Natural killer cell (primary cell): ENCODE measurements at regions of chr3 and their contacts with region 1.

Region 1: GRCh38 chr3:149967086-149967685 is 3.5 kb downstream of the PFN2 start:
- DNase-seq: peak in 1 of 2 donors; percentile 70
- ATAC-seq: no peak
- H3K4me3 ChIP-seq: no peak overlapping the region
- H3K4me3 Mint-ChIP-seq: peak overlapping the region; percentile 50
- H3K27ac ChIP-seq: no peak overlapping the region
- H3K27ac Mint-ChIP-seq: no peak overlapping the region
- H3K4me1 ChIP-seq: peaks cover 11% of the 10 kb centered on the region
- H3K4me1 Mint-ChIP-seq: peaks cover 20 to 23% of the 10 kb centered on the region in 2 donors
- H3K27me3 ChIP-seq: peaks cover 9% of the 10 kb centered on the region
- H3K27me3 Mint-ChIP-seq: peaks cover 8 to 14% of the 10 kb centered on the region in 2 donors
- CTCF ChIP-seq: peak; percentile 73

Region 2: DNA sequence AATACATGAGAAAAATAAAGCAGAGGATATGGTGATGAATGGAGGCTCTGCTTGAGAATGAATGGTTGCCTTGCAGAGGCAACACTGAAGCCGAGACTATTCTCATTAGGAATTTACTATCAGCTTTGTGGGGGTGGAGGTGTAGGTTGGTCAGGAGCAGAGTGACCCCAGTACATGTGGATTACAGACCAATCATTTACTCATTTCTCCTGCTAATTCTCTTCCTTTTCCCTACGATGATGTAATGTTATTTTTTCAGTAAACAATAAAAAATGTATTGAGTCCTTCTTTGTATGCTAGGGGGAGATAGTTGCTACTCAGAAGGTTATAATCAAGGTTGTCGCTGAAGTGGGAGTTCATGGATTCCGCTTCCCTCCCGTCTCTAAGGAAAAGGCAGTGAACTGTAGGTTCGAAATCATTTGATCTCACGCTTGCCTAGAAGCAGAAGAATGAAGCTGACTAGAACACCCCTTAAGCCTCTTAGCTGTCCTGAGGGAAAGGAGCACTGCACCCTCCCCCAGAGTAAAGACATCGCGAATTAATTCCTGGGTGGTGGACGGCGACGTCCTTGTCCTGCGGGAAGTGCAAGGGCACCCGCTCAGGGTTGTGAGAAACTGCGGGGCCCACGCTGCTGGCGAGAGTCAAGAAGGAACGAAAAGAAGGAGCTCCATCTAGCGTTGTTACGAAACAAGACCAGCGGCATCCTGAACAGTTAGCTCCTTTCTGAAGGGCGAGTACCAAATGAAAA is 216.7 kb after region 1 on chr3:
- intact Hi-C with region 1: loop called (anchors 1 kb)
- DNase-seq: peak in 1 of 2 donors; percentile 69
- ATAC-seq: peak; percentile 67 to 87 (median 75)
- H3K4me3 ChIP-seq: no peak overlapping the region
- H3K4me3 Mint-ChIP-seq: no peak overlapping the region
- H3K27ac ChIP-seq: no peak overlapping the region
- H3K27ac Mint-ChIP-seq: no peak overlapping the region
- H3K4me1 ChIP-seq: peaks cover 6% of the 10 kb centered on the region
- H3K4me1 Mint-ChIP-seq: no peaks in the 10 kb centered on the region
- H3K27me3 ChIP-seq: peaks cover 5% of the 10 kb centered on the region
- H3K27me3 Mint-ChIP-seq: peaks cover 15 to 21% of the 10 kb centered on the region in 2 donors
- CTCF ChIP-seq: peak; percentile 13

Region 3: GRCh38 chr3:150202711-150203110 is 235.5 kb after region 1 on chr3:
- intact Hi-C with region 1: no loop called
- DNase-seq: no peak
- ATAC-seq: no peak
- H3K4me3 ChIP-seq: no peak overlapping the region
- H3K4me3 Mint-ChIP-seq: no peak overlapping the region
- H3K27ac ChIP-seq: no peak overlapping the region
- H3K27ac Mint-ChIP-seq: no peak overlapping the region
- H3K4me1 ChIP-seq: no peaks in the 10 kb centered on the region
- H3K4me1 Mint-ChIP-seq: no peaks in the 10 kb centered on the region
- H3K27me3 ChIP-seq: no peaks in the 10 kb centered on the region
- H3K27me3 Mint-ChIP-seq: peaks cover 12 to 34% of the 10 kb centered on the region in 2 donors
- CTCF ChIP-seq: no peak

Region 4: DNA sequence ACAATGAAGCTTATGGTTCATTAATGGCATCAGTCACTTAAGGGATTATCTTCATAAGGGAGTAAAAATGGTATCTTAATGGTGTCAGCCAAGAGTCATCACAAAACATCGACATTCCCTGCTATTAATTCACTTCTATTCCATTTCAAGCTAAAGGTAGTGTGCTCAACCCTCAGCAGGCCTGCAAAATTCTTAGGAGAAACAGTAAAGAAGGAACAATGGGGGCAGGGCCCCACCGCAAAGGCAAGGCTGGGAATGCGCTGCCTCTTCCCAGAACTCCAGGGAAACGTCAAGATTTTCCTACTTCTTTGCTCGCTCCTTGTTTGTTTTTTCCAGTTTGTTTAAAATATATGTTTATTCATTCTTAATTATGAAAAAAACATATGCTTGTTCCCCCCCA is 253.6 kb after region 1 on chr3:
- intact Hi-C with region 1: loop called (anchors 2 kb)
- DNase-seq: no peak
- ATAC-seq: no peak
- H3K4me3 ChIP-seq: no peak overlapping the region
- H3K4me3 Mint-ChIP-seq: no peak overlapping the region
- H3K27ac ChIP-seq: no peak overlapping the region
- H3K27ac Mint-ChIP-seq: no peak overlapping the region
- H3K4me1 ChIP-seq: peaks cover 6% of the 10 kb centered on the region
- H3K4me1 Mint-ChIP-seq: peaks cover 5 to 8% of the 10 kb centered on the region in 2 donors
- H3K27me3 ChIP-seq: peaks cover 3% of the 10 kb centered on the region
- H3K27me3 Mint-ChIP-seq: peaks cover 27 to 33% of the 10 kb centered on the region in 2 donors
- CTCF ChIP-seq: no peak